ENCODE measurements at regions of chr14 and their contacts with region 1.

Region 1: GRCh38 chr14:95098984-95099599 is 58.2 kb downstream of the DICER1 start:
- DNase-seq: peak; percentile 21 to 64
- ATAC-seq: peak; percentile 46 to 77 (median 66)
- H3K4me3 ChIP-seq: no peak overlapping the region
- H3K4me3 Mint-ChIP-seq: no peak overlapping the region
- H3K27ac ChIP-seq: no peak overlapping the region
- H3K27ac Mint-ChIP-seq: no peak overlapping the region
- H3K4me1 ChIP-seq: no peaks in the 10 kb centered on the region
- H3K4me1 Mint-ChIP-seq: peaks cover 18 to 32% of the 10 kb centered on the region in 2 donors
- H3K27me3 ChIP-seq: no peaks in the 10 kb centered on the region
- H3K27me3 Mint-ChIP-seq: no peaks in the 10 kb centered on the region
- CTCF ChIP-seq: peak; percentile 67

Region 2: DNA sequence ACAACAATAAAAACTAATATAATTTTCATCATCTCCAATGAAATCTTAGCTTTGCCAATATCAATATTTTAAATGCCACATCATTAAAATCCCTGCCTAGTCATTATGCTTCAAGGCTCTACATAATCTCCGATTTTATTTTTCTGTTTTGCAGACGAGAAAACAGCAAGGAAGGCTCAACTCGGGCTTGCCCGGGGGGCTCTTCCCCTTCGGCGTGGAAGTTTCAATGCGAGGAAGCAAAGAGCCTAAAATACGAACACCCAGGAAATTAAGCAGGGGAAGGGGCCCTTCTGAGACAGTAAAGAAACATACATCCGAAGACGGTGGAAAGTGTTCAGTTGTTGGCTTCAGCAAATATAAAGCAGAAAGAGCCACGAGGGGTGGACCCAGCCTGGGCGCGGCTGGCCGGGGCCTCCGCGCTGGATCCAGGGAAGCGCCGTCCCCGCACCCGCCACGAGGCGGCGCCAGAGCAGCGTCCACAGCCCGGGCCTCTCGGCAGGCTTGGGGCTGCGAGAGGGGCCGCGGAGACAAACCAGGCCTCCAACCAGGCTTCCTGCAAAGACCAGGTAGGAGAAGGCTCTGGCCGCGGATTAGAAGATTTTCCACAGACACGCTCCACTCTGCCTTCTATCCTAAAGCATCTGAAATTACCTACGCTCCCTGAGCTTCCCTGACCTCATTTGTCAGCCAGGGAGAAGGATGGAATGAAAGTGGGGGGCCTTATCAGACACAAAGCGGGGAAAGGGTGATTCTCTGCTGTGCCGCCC is 409.7 kb before region 1 on chr14:
- intact Hi-C with region 1: loop called (anchors 1 kb)
- DNase-seq: peak; percentile 40 to 53
- ATAC-seq: peak; percentile 65 to 93 (median 70)
- H3K4me3 ChIP-seq: no peak overlapping the region
- H3K4me3 Mint-ChIP-seq: no peak overlapping the region
- H3K27ac ChIP-seq: no peak overlapping the region
- H3K27ac Mint-ChIP-seq: no peak overlapping the region
- H3K4me1 ChIP-seq: peaks cover 4% of the 10 kb centered on the region
- H3K4me1 Mint-ChIP-seq: no peaks in the 10 kb centered on the region
- H3K27me3 ChIP-seq: no peaks in the 10 kb centered on the region
- H3K27me3 Mint-ChIP-seq: peaks cover 9 to 15% of the 10 kb centered on the region in 2 donors
- CTCF ChIP-seq: peak; percentile 75

Region 3: GRCh38 chr14:94904636-94905035 is 194.5 kb before region 1 on chr14:
- intact Hi-C with region 1: loop called (anchors 1 kb)
- DNase-seq: no peak
- ATAC-seq: no peak
- H3K4me3 ChIP-seq: no peak overlapping the region
- H3K4me3 Mint-ChIP-seq: no peak overlapping the region
- H3K27ac ChIP-seq: no peak overlapping the region
- H3K27ac Mint-ChIP-seq: no peak overlapping the region
- H3K4me1 ChIP-seq: no peaks in the 10 kb centered on the region
- H3K4me1 Mint-ChIP-seq: no peaks in the 10 kb centered on the region
- H3K27me3 ChIP-seq: no peaks in the 10 kb centered on the region
- H3K27me3 Mint-ChIP-seq: peaks cover 3 to 10% of the 10 kb centered on the region in 2 donors
- CTCF ChIP-seq: no peak

Region 4: GRCh38 chr14:95078828-95079227 is 20.3 kb before region 1 on chr14:
- intact Hi-C with region 1: no loop called
- DNase-seq: no peak
- ATAC-seq: no peak
- H3K4me3 ChIP-seq: no peak overlapping the region
- H3K4me3 Mint-ChIP-seq: no peak overlapping the region
- H3K27ac ChIP-seq: no peak overlapping the region
- H3K27ac Mint-ChIP-seq: no peak overlapping the region
- H3K4me1 ChIP-seq: no peaks in the 10 kb centered on the region
- H3K4me1 Mint-ChIP-seq: no peaks in the 10 kb centered on the region
- H3K27me3 ChIP-seq: no peaks in the 10 kb centered on the region
- H3K27me3 Mint-ChIP-seq: peaks cover 0 to 14% of the 10 kb centered on the region in 2 donors
- CTCF ChIP-seq: no peak

Region 5: DNA sequence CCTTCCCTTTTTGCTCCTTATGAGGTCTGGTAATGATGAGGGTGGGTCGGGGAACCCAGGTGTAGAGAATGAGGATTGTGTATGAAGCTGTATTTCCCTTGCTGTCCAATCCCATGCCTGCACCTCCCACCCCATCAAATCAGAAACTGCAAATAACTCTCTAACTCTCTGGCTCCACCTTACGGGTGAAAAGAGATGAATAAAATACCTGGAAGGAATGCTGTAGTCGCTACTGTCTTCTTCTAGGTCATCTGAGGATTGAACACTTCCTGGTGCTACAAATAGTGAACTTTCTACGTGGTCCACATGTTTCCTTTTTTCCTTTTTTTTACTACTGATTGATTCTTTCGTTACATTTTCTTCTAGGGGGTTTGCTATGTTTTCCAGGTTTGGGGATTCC is 97.2 kb after region 1 on chr14:
- intact Hi-C with region 1: no loop called
- DNase-seq: peak in 1 of 2 donors; percentile 46
- ATAC-seq: peak in 2 of 3 donors; percentile 41 to 55
- H3K4me3 ChIP-seq: no peak overlapping the region
- H3K4me3 Mint-ChIP-seq: no peak overlapping the region
- H3K27ac ChIP-seq: no peak overlapping the region
- H3K27ac Mint-ChIP-seq: no peak overlapping the region
- H3K4me1 ChIP-seq: no peaks in the 10 kb centered on the region
- H3K4me1 Mint-ChIP-seq: peaks cover 0 to 7% of the 10 kb centered on the region in 2 donors
- H3K27me3 ChIP-seq: no peaks in the 10 kb centered on the region
- H3K27me3 Mint-ChIP-seq: peaks cover 8 to 16% of the 10 kb centered on the region in 2 donors
- CTCF ChIP-seq: no peak

Measured in natural killer cell (primary cell).